ENCODE measurements at regions of chr5 and their contacts with region 1.

Region 1: GRCh38 chr5:132746954-132747615 is at the start of gene CCNI2:
- DNase-seq: peak; percentile 40 to 88 (median 67)
- ATAC-seq: peak; percentile 86
- H3K4me3 ChIP-seq: peak within 1 kb of the TSS; percentile 55
- H3K4me3 Mint-ChIP-seq: peak within 1 kb of the TSS; percentile 88
- H3K27ac ChIP-seq: peak within 1 kb of the TSS; percentile 12 to 64
- H3K27ac Mint-ChIP-seq: peak within 1 kb of the TSS; percentile 85
- H3K4me1 ChIP-seq: peaks cover 14% of the 10 kb centered on the region
- H3K4me1 Mint-ChIP-seq: peaks cover 24% of the 10 kb centered on the region
- H3K27me3 ChIP-seq: no peaks in the 10 kb centered on the region
- H3K27me3 Mint-ChIP-seq: no peaks in the 10 kb centered on the region
- CTCF ChIP-seq: peak; percentile 58
- total RNA-seq, gene CCNI2: 7.2 to 8.8 TPM

Region 2: DNA sequence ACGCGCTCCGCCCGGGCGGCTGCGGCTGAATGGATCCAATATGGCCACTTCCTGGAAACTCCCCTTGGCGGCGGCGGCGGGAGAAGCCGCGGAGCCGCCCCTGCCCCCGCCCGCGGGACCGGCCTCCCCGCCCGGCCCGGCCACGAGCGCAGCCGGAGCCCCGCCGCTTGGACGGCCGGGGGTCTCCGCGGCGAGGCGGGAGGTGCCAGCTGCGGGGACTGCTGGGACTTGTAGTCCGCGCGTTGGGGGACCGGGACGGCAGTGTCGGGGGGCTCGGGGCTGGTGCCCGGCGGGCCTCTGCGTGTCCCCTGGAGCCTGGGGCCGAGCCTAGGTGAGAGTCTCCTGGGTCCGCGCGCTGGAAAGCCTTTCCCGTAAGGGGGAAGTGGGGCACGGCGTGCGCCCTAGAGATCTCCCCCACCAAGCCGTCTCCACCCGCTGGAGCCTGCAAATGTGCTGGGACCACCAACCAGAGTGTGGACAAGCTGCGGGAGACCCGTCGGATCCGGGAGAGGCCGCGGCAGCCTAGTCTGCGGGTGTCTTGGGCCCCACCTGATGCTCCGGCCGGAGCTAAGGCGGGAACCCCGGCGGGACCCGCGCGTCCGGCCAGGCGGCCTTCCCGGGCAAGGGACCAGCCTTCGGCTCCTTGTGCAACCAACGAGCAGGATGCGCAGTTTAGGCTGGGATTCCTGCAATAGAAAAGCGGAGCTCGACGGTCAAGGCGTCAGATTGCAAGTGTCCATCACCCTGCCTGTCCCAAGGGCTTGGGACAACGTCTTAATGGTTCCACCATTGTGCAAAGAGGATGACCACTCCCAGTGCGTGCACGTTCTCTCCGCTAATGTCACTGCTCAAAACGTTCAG is 30.4 kb after region 1 on chr5 and contains the start of gene SEPTIN8:
- CTCF ChIA-PET with region 1: interaction called, 3 read pairs
- POLR2A ChIA-PET with region 1: interaction called, 14 read pairs
- intact Hi-C with region 1: no loop called
- DNase-seq: peak in 9 of 14 experiments; percentile 10 to 74 (median 37)
- ATAC-seq: peak; percentile 69
- H3K4me3 ChIP-seq: peak within 1 kb of the TSS; percentile 82
- H3K4me3 Mint-ChIP-seq: peak within 1 kb of the TSS; percentile 87
- H3K27ac ChIP-seq: no peak within 1 kb of the TSS
- H3K27ac Mint-ChIP-seq: peak within 1 kb of the TSS; percentile 22
- H3K4me1 ChIP-seq: peaks cover 23% of the 10 kb centered on the region
- H3K4me1 Mint-ChIP-seq: peaks cover 25% of the 10 kb centered on the region
- H3K27me3 ChIP-seq: peaks cover 10 to 22% of the 10 kb centered on the region in 2 experiments
- H3K27me3 Mint-ChIP-seq: peaks cover 48% of the 10 kb centered on the region
- CTCF ChIP-seq: no peak
- total RNA-seq, gene SEPTIN8: 4.4 to 5.3 TPM

Region 3: GRCh38 chr5:132820162-132820754 is 73.2 kb after region 1 on chr5:
- CTCF ChIA-PET with region 1: interaction called, 10 read pairs
- POLR2A ChIA-PET with region 1: interaction called, 7 read pairs
- intact Hi-C with region 1: loop called (anchors 1 to 2 kb)
- DNase-seq: peak; percentile 79 to 94 (median 86)
- ATAC-seq: peak; percentile 79
- H3K4me3 ChIP-seq: peak overlapping the region; percentile 43
- H3K4me3 Mint-ChIP-seq: peak overlapping the region; percentile 62
- H3K27ac ChIP-seq: no peak overlapping the region
- H3K27ac Mint-ChIP-seq: no peak overlapping the region
- H3K4me1 ChIP-seq: peaks cover 22% of the 10 kb centered on the region
- H3K4me1 Mint-ChIP-seq: peaks cover 13% of the 10 kb centered on the region
- H3K27me3 ChIP-seq: peaks cover 27 to 30% of the 10 kb centered on the region in 2 experiments
- H3K27me3 Mint-ChIP-seq: peaks cover 50% of the 10 kb centered on the region
- CTCF ChIP-seq: peak; percentile 90